Activated T-helper 1 cell treated with anti-CD3 and anti-CD28 coated beads, Interleukin-12 subunit alpha, Interleukin-12 subunit beta, Interleukin-2, Interleukin-4 antibody, amounts not matched to agents 30 ng/mL and 10 ng/mL and 1 ng/mL, durations not matched to agents 14 hours and 24 hours and 36 hours (primary cell): ENCODE measurements at regions of chr12 and their contacts with region 1.

Region 1: GRCh38 chr12:124774462-124775167 is 89.0 kb downstream of the SCARB1 start:
- DNase-seq: peak; percentile 75
- H3K4me3 Mint-ChIP-seq: peak overlapping the region; percentile 53
- H3K27ac Mint-ChIP-seq: peak overlapping the region; percentile 69
- H3K4me1 Mint-ChIP-seq: peaks cover 30% of the 10 kb centered on the region
- H3K27me3 Mint-ChIP-seq: peaks cover 18% of the 10 kb centered on the region

Region 2: DNA sequence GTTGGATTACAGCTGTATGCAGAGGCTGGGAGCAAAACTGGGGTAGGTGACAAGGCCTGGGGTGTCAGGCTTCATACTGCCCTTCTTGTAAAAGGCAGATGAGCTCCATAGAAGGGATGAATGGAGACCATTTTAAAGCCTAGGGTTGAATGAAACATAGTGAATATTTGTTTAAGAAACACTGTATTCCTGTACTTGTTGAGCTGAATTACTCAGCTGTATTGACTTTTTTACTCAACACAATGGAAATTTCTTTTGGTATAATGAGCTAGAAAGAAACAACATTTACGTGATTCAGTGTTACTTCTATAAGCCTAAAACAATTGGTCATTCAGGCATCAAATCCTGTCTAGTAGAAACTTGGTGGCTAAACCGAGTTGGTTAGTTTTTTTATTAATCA is 1048.4 kb before region 1 on chr12:
- intact Hi-C with region 1: no loop called
- DNase-seq: no peak
- H3K4me3 Mint-ChIP-seq: no peak overlapping the region
- H3K27ac Mint-ChIP-seq: no peak overlapping the region
- H3K4me1 Mint-ChIP-seq: peaks cover 4% of the 10 kb centered on the region
- H3K27me3 Mint-ChIP-seq: no peaks in the 10 kb centered on the region

Region 3: DNA sequence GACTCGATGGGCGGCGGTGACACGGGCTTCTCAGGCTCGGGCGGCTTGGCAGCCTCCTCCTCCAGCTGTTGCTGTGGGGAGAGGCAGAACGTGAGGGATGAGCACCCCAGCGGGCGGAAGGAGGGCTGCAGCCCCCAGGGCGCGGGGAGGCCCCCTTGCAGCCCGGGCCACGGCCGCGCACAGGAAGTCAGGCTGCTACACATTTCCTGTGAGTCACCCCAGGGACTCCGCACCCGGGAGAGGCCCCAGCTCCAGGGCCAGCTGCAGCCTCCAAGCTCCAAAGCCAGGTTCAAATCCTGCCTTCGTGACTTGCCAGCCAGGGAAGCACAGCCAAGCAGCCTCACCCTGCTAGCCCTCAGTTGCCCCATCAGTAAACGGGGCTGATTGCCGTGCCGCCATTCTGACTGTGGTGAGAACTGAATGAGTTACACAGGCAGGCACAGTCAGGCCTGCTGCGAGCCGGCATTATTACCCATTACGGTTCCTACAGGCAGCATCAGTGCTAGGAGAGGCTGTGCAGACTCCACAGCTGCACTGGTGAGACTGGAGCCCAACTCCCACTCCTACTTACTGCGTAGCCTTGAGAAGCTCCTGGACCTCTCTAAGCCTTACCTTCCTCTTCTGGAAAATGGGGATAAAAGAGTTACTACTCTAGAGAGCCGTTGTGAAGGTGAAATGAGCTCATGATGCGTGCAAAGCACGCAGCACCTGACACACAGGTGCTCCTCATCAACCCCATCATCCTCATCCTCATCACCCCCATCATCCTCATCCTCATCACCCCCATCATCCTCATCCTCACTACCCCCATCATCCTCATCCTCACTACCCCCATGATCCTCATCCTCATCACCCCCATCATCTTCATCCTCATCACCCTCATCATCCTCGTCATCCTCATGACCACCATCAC is 308.1 kb before region 1 on chr12:
- intact Hi-C with region 1: loop called (anchors 1 kb)
- DNase-seq: peak; percentile 81
- H3K4me3 Mint-ChIP-seq: peak overlapping the region; percentile 49
- H3K27ac Mint-ChIP-seq: peak overlapping the region; percentile 68
- H3K4me1 Mint-ChIP-seq: peaks cover 20% of the 10 kb centered on the region
- H3K27me3 Mint-ChIP-seq: no peaks in the 10 kb centered on the region

Region 4: DNA sequence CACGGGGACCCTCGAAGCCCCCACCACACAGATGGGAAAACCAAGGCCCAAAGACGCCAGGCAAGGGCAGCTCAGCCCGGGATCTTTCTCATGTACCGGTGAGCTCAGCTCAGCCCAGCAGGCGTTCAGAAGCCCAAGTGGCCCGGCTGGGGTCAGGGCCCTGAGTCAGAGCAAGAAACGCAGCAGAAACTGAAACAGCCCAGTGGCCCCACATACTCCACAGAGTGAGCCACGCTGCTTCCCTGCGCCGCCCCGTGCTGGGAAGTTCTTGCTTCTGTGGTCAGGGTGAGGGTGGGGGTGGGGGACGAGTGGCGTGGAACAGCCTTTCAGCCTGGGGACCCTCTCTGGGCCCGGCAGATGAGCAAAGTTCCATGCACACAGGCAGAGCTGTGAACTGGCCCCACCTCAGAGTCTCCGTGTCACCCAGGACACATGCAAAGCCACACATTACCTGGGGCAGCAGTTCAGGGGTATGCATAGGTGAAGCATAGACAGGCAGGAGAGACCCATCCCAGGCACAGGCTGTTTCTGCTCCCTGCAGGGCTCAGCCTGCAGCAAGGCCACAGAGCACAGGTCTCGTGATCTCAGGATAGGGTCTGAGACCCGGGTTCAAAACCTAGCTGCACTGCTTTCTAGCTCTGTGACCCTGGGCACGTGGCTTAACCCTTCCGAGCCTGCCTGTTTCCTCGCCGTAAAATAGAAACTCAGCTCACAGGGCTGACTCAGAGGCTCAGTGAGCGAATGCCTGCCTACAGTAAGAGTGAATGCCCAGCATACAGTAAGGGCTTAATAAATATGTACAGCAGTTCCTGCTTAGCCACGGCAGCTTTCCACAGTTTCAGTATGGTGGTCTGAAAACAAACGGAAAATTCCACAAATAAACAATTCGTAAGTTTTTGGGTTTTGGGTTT is 228.9 kb before region 1 on chr12:
- intact Hi-C with region 1: loop called (anchors 2 kb)
- DNase-seq: peak; percentile 57
- H3K4me3 Mint-ChIP-seq: peak overlapping the region; percentile 26
- H3K27ac Mint-ChIP-seq: peak overlapping the region; percentile 58
- H3K4me1 Mint-ChIP-seq: peaks cover 50% of the 10 kb centered on the region
- H3K27me3 Mint-ChIP-seq: peaks cover 3% of the 10 kb centered on the region

Region 5: DNA sequence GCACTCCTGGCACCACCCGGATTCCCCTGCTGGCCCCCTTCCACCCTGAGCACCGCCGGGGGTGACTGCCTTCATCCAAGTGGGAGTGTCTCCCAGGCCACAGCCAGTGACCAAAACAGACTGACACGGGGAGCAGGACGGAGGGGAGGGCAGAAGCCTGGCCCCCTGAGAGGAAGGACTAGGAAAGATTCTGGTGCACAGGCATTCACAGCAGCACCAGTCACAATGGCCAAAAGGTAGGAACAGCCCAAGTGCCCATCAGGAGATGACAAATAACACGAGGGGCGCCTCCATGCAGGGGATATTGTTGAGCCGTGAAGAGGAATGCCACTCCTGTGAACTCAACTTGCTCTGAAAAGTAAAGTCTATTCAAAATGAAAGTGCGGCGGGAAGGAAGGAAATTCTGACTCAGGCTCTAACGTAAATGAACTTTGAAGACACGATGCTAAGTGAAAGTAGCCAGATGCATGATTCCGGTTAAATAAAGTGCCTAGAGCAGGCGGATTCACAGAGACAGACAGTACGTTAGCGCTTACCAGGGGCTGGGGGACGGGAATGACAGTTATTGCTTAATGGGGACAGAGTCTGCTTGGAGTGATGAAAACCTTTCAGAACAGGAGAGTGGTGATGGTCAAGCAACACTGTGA is 61.1 kb before region 1 on chr12:
- intact Hi-C with region 1: loop called (anchors 1 kb)
- DNase-seq: peak; percentile 60
- H3K4me3 Mint-ChIP-seq: peak overlapping the region; percentile 62
- H3K27ac Mint-ChIP-seq: peak overlapping the region; percentile 93
- H3K4me1 Mint-ChIP-seq: peaks cover 24% of the 10 kb centered on the region
- H3K27me3 Mint-ChIP-seq: peaks cover 33% of the 10 kb centered on the region

Region 6: DNA sequence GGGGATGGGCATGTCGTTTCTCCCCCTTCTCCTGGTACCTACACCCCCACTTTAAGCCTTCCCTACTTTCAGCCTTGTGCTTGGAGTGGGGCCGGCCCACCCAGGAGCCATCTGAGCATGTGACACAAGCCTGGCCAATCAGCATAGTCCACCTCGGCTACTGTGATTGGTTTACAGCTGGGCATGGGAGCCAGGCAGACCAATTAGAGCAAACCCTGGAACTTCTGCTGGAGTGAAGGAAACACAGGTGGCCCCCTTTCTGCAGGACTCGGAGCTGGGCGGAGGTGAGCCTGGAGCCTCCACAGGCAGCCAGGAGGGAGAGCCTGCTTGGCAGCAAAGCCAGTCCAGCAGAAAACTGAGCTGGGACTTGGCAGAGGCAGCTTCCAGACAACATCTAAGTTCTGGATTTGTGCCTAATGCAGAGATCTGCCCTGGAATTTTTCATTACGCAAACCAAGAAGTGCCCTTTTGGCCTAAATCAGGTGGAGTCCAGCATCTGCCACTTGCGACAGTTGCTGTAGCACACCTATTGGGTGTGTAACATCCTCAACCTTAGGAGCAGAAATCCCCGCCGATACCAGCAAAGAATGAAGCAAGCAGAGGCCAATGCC is 29.5 kb after region 1 on chr12:
- intact Hi-C with region 1: no loop called
- DNase-seq: no peak
- H3K4me3 Mint-ChIP-seq: no peak overlapping the region
- H3K27ac Mint-ChIP-seq: no peak overlapping the region
- H3K4me1 Mint-ChIP-seq: no peaks in the 10 kb centered on the region
- H3K27me3 Mint-ChIP-seq: no peaks in the 10 kb centered on the region

Region 7: DNA sequence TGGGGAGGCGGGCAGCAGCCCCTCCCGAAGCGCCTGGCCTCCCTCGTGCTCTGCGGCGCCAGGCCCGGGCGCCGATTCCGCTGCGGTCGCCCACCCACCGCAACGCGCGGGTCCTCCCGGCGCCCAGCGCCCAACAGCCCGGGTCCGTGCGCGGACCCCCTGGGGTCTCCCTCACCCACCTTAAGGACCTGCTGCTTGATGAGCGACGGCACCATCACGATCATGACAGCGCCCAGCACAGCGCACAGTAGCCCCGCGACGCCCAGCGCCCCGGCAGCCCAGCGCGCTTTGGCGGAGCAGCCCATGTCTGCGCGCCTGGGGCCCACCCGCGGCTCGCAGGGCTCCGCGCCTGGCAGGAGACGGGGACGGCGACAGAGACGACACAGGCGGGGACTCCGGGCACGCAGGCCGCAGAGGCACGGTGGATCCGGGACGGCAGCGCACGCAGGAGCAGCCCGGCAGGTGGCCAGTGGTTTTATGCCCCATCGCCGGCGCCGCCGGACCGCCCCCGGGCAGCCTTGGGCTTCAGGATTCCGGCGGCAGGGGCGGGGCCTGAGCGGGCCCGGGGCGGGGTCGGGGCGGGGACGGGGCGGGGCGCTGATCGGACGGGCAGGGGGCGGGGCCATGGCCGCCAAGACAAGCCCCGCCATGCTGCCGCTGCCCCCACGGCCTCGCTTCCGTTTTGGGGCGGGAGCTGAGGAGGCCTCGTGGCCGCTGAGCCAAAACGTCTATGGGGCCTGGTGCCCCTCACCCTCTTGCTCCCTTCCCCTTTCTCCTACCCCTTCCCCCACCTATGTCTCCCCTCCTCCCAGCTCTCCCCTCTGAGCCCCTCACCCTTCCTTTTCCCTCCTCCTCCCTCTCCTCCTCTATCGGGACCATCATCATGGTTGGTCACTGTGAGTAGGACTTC is 89.1 kb after region 1 on chr12 and contains the start of gene SCARB1:
- intact Hi-C with region 1: loop called (anchors 1 kb)
- DNase-seq: peak; percentile 70
- H3K4me3 Mint-ChIP-seq: peak within 1 kb of the TSS; percentile 85
- H3K27ac Mint-ChIP-seq: peak within 1 kb of the TSS; percentile 90
- H3K4me1 Mint-ChIP-seq: peaks cover 23% of the 10 kb centered on the region
- H3K27me3 Mint-ChIP-seq: peaks cover 2% of the 10 kb centered on the region
- total RNA-seq, gene SCARB1: 17.9 and 18.5 TPM in 2 replicates

Region 8: GRCh38 chr12:124906606-124907261 is 132.1 kb after region 1 on chr12:
- intact Hi-C with region 1: loop called (anchors 2 kb)
- DNase-seq: peak; percentile 86
- H3K4me3 Mint-ChIP-seq: no peak overlapping the region
- H3K27ac Mint-ChIP-seq: peak overlapping the region; percentile 1
- H3K4me1 Mint-ChIP-seq: peaks cover 36% of the 10 kb centered on the region
- H3K27me3 Mint-ChIP-seq: no peaks in the 10 kb centered on the region

Region 9: GRCh38 chr12:124940549-124941527 is 166.2 kb after region 1 on chr12:
- intact Hi-C with region 1: loop called (anchors 1 kb)
- DNase-seq: peak; percentile 80
- H3K4me3 Mint-ChIP-seq: no peak overlapping the region
- H3K27ac Mint-ChIP-seq: no peak overlapping the region
- H3K4me1 Mint-ChIP-seq: no peaks in the 10 kb centered on the region
- H3K27me3 Mint-ChIP-seq: no peaks in the 10 kb centered on the region